CD4-positive, alpha-beta T cell (primary cell): ENCODE measurements at regions of chr1 and their contacts with region 1.

Region 1: DNA sequence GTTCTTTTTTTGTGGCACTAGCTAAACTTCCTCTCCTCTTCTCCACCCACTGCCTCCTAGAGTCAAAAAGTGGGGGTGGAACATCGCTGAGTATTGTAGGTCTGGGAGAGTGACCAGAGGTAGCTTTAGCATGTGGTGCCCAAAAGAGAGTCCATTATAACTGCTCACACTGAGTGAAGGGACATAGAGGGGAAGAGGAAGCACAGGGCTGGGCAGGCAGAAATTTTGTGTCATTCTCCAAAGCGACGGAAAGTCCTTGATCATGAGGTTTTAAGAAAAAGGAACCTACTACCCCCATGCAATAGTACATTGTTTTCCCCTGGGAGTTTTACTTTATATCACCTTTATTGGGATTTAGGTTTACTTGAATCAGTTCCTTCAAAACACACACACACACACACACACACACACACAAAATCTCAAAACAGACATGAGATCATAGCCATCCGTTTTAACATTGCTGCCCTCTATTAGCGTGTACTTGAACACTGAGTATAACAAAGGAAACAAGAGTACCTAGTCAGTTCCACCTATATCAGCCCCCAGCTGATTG is 4.1 kb downstream of the CD84 start:
- DNase-seq: peak in 2 of 14 experiments; percentile 53 to 57
- ATAC-seq: peak; percentile 21
- H3K4me3 ChIP-seq: peak overlapping the region; percentile 56
- H3K4me3 Mint-ChIP-seq: peak overlapping the region; percentile 94
- H3K27ac ChIP-seq: peak overlapping the region; percentile 29 to 60
- H3K27ac Mint-ChIP-seq: peak overlapping the region; percentile 87
- H3K4me1 ChIP-seq: peaks cover 66% of the 10 kb centered on the region
- H3K4me1 Mint-ChIP-seq: peaks cover 96% of the 10 kb centered on the region
- H3K27me3 ChIP-seq: no peaks in the 10 kb centered on the region
- H3K27me3 Mint-ChIP-seq: no peaks in the 10 kb centered on the region
- CTCF ChIP-seq: no peak

Region 2: GRCh38 chr1:160366731-160367515 is 208.3 kb before region 1 on chr1 and contains the start of gene NHLH1:
- CTCF ChIA-PET with region 1: no interaction called
- POLR2A ChIA-PET with region 1: no interaction called
- intact Hi-C with region 1: no loop called
- DNase-seq: no peak
- ATAC-seq: no peak
- H3K4me3 ChIP-seq: no peak within 1 kb of the TSS
- H3K4me3 Mint-ChIP-seq: no peak within 1 kb of the TSS
- H3K27ac ChIP-seq: no peak within 1 kb of the TSS
- H3K27ac Mint-ChIP-seq: no peak within 1 kb of the TSS
- H3K4me1 ChIP-seq: no peaks in the 10 kb centered on the region
- H3K4me1 Mint-ChIP-seq: no peaks in the 10 kb centered on the region
- H3K27me3 ChIP-seq: no peaks in the 10 kb centered on the region
- H3K27me3 Mint-ChIP-seq: no peaks in the 10 kb centered on the region
- CTCF ChIP-seq: no peak
- total RNA-seq, gene NHLH1: 0.08 TPM in 1 of 2 experiments, not detected in the other

Region 3: DNA sequence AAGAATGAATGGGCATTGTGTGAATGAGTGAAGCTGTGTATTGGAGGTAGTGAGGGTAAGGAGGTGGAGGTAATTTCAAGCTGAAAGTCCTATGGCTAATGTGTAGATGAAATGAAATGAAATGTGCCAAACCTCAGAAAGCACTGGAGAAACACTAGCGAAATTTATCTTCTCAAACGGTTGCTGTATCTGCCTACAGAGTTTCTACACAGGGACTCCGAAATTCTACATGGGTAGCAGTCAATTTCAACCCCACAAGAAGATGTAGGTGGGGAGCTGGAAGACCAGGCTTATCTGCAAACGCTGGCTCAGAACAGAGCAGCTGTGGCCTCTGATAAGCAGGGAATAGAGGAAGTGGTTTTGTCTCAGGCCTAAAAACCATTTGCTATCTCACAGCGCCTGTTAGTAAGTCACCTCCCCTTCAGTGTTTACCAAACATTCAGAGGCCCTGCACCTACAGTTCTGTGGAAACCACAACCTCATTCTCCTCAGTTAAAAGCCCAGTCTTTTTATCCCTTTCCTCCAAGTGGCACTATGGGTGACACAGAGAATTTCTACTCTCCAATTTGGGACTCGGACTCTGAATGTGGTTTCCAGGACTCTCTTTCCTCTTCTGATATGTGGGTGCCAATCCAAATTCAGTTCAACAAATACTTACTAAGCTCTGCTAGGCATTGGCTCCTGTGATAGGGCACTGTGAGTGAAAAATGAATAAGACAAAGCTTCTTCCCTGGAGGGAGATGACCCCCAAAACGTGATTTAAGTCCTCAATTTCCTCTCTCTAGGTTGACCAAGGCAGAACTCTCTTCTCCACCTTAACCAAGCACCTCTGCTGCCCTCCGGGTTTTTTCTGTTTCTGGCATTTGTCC is 35.0 kb before region 1 on chr1:
- CTCF ChIA-PET with region 1: interaction called, 4 read pairs
- POLR2A ChIA-PET with region 1: interaction called, 21 read pairs
- intact Hi-C with region 1: loop called in 1 of 2 experiments (anchors 2 kb)
- DNase-seq: peak in 12 of 14 experiments; percentile 19 to 91 (median 34)
- ATAC-seq: peak; percentile 90
- H3K4me3 ChIP-seq: peak overlapping the region; percentile 13
- H3K4me3 Mint-ChIP-seq: peak overlapping the region; percentile 59
- H3K27ac ChIP-seq: peak overlapping the region; percentile 54 to 68
- H3K27ac Mint-ChIP-seq: peak overlapping the region; percentile 88
- H3K4me1 ChIP-seq: peaks cover 55% of the 10 kb centered on the region
- H3K4me1 Mint-ChIP-seq: peaks cover 64% of the 10 kb centered on the region
- H3K27me3 ChIP-seq: no peaks in the 10 kb centered on the region
- H3K27me3 Mint-ChIP-seq: no peaks in the 10 kb centered on the region
- CTCF ChIP-seq: no peak

Region 4: DNA sequence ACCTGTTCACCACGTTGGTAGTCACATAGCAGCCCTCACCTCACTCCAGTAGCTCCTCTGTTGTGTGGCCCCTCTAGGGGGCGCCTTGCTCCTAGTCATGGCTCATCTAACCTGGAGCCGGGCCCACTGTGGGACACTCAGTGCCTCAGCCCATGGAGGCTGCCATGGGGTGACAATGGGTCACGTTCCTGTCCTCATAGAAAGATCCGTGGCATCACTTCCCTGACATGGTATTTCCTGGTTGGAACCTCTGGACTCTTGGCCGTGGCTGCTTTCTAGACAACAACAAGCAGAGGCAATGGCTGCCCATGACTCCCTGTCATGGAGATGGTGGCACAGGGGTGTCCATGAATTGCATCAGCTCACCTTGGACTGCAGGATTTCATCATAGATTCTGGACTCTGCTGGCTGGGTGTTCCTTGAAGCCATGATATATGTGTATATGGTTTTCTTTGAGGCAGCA is 24.6 kb before region 1 on chr1:
- CTCF ChIA-PET with region 1: interaction called, 4 read pairs
- POLR2A ChIA-PET with region 1: interaction called, 13 read pairs
- intact Hi-C with region 1: no loop called
- DNase-seq: peak; percentile 34 to 78 (median 54)
- ATAC-seq: peak; percentile 71
- H3K4me3 ChIP-seq: no peak overlapping the region
- H3K4me3 Mint-ChIP-seq: no peak overlapping the region
- H3K27ac ChIP-seq: no peak overlapping the region
- H3K27ac Mint-ChIP-seq: peak overlapping the region; percentile 58
- H3K4me1 ChIP-seq: peaks cover 14% of the 10 kb centered on the region
- H3K4me1 Mint-ChIP-seq: peaks cover 33% of the 10 kb centered on the region
- H3K27me3 ChIP-seq: no peaks in the 10 kb centered on the region
- H3K27me3 Mint-ChIP-seq: no peaks in the 10 kb centered on the region
- CTCF ChIP-seq: peak; percentile 53

Region 5: GRCh38 chr1:160558660-160559380 is 16.4 kb before region 1 on chr1:
- CTCF ChIA-PET with region 1: interaction called, 13 read pairs
- POLR2A ChIA-PET with region 1: interaction called, 189 read pairs
- intact Hi-C with region 1: loop called in 1 of 2 experiments (anchors 2 kb)
- DNase-seq: peak in 1 of 14 experiments; percentile 74
- ATAC-seq: no peak
- H3K4me3 ChIP-seq: peak overlapping the region; percentile 24
- H3K4me3 Mint-ChIP-seq: peak overlapping the region; percentile 70
- H3K27ac ChIP-seq: peak overlapping the region; percentile 10 to 55
- H3K27ac Mint-ChIP-seq: peak overlapping the region; percentile 83
- H3K4me1 ChIP-seq: peaks cover 26% of the 10 kb centered on the region
- H3K4me1 Mint-ChIP-seq: peaks cover 67% of the 10 kb centered on the region
- H3K27me3 ChIP-seq: no peaks in the 10 kb centered on the region
- H3K27me3 Mint-ChIP-seq: no peaks in the 10 kb centered on the region
- CTCF ChIP-seq: no peak